ENCODE measurements at regions of chr14 and their contacts with region 1.

Region 1: DNA sequence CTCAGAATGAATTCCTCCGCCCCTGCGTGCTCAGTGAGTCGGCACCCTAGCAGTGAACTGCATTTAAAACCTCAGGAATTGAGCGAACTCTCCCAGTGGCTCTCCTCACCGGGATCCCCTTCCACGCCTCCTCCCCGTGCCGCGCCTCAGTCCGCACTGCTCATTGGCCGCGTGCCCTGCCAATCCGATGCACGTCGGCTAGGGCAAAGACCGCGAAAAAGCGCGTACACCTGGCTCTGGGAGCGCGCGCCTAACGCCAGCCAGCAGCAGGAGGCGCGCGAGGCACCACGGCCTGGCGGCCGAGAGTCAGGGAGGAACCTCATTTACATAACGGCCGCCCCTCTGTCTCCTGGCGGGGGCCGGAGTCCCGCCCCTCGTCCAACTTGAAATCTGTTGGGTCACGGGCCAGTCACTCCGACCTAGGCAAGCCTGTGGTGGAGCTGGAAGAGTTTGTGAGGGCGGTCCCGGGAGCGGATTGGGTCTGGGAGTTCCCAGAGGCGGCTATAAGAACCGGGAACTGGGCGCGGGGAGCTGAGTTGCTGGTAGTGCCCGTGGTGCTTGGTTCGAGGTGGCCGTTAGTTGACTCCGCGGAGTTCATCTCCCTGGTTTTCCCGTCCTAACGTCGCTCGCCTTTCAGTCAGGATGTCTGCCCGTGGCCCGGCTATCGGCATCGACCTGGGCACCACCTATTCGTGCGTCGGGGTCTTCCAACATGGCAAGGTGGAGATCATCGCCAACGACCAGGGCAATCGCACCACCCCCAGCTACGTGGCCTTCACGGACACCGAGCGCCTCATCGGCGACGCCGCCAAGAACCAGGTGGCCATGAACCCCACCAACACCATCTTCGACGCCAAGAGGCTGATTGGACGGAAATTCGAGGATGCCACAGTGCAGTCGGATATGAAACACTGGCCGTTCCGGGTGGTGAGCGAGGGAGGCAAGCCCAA is at the start of gene HSPA2:
- DNase-seq: peak; percentile 93
- ATAC-seq: peak; percentile 90
- H3K4me3 Mint-ChIP-seq: peak within 1 kb of the TSS; percentile 100
- H3K27ac Mint-ChIP-seq: peak within 1 kb of the TSS; percentile 96
- H3K4me1 Mint-ChIP-seq: peaks cover 33% of the 10 kb centered on the region
- H3K27me3 Mint-ChIP-seq: peaks cover 2% of the 10 kb centered on the region
- CTCF ChIP-seq: no peak
- total RNA-seq, gene HSPA2: 3.8 and 5.4 TPM in 2 replicates

Region 2: DNA sequence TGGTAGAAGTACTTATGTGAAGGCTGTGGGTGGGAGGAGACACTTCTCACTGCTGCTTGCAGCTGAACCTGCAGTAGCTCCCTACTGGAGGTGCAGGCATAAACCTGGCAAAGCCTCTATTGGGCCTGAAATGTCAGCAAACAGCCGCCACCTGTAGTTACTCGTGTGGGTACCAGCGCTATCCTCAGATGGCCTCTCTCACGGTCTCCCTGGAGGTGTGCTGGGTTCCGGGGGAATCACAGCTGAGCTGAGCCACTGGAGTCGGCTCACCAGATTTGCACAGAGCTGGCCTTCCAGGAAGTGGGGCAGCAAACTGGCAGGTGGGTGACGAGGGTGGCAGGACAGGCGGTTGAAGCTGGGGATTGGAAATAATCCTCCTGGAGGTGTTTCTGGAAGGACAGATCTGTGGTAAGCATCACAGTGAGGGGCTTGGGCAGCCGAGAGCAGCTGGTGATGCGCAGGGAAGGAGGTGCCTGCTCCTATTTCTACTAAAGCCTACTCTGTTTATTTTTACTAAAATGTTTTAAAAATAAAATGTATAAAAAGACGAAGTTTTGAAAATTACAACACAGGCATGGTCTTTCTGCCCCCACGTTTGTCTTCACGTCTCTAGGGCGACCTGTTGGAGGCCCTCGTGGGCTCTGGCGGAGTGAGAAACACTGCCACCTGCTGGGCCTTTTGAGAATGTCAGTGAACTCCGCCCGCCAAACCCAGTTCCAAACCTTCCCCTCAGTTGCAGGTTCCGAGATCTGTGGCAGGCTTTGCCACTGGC is 95.9 kb after region 1 on chr14:
- CTCF ChIA-PET with region 1: interaction called, 4 read pairs
- POLR2A ChIA-PET with region 1: interaction called, 4 read pairs
- intact Hi-C with region 1: loop called (anchors 1 kb)
- DNase-seq: peak; percentile 54
- ATAC-seq: peak; percentile 93
- H3K4me3 Mint-ChIP-seq: no peak overlapping the region
- H3K27ac Mint-ChIP-seq: no peak overlapping the region
- H3K4me1 Mint-ChIP-seq: peaks cover 7% of the 10 kb centered on the region
- H3K27me3 Mint-ChIP-seq: no peaks in the 10 kb centered on the region
- CTCF ChIP-seq: peak; percentile 32

Region 3: GRCh38 chr14:64764641-64765520 is 224.4 kb after region 1 on chr14:
- CTCF ChIA-PET with region 1: no interaction called
- POLR2A ChIA-PET with region 1: no interaction called
- intact Hi-C with region 1: loop called (anchors 5 kb)
- DNase-seq: peak; percentile 49
- ATAC-seq: peak; percentile 66
- H3K4me3 Mint-ChIP-seq: peak overlapping the region; percentile 59
- H3K27ac Mint-ChIP-seq: no peak overlapping the region
- H3K4me1 Mint-ChIP-seq: peaks cover 14% of the 10 kb centered on the region
- H3K27me3 Mint-ChIP-seq: peaks cover 15% of the 10 kb centered on the region
- CTCF ChIP-seq: no peak

Region 4: DNA sequence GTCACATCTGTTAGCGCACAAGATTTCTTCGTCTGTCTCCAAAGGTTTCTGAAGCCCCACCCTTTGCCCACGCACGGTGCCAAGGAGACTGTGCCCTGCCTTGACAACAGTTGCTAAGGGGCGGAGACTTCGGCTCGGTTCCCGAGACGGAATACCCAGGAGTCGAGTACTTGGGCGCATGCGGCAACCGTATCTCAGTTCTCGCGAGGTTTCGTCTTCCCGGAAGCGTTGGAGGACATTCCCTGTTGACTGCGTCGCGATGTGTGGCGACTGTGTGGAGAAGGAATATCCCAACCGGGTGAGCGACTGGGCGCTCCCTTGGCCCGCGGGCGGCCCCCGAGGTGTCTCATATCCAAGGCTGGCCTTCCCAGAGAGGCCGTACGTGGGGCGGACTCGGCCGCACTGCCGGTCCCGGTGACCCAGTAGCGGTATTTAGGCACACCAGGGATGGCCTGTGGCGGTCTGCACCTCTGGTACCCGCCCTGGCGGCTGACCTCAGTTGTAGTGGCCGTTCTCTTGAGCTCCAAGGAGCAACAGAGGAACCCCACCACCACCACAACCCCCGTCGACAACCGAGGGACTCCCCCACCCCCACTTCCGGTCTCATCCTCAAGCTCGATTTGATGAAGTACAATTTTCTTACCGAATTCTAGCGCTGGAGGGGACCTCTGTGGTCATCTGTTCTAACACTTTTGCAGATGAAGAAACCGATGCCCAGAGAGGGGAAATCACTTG is 373.9 kb after region 1 on chr14 and contains the start of gene CHURC1:
- CTCF ChIA-PET with region 1: no interaction called
- POLR2A ChIA-PET with region 1: no interaction called
- intact Hi-C with region 1: loop called (anchors 1 kb)
- DNase-seq: peak; percentile 89
- ATAC-seq: peak; percentile 98
- H3K4me3 Mint-ChIP-seq: peak within 1 kb of the TSS; percentile 92
- H3K27ac Mint-ChIP-seq: peak within 1 kb of the TSS; percentile 88
- H3K4me1 Mint-ChIP-seq: peaks cover 43% of the 10 kb centered on the region
- H3K27me3 Mint-ChIP-seq: peaks cover 3% of the 10 kb centered on the region
- CTCF ChIP-seq: no peak
- total RNA-seq, gene CHURC1: 69.6 and 83.8 TPM in 2 replicates

Measured in activated B cell treated with CpG ODN at 0.5 μM for 24 hours (primary cell).